ENCODE measurements at regions of chr4 and their contacts with region 1.

Region 1: GRCh38 chr4:41214136-41214824 is at the start of gene APBB2:
- DNase-seq: peak; percentile 80 to 91
- ATAC-seq: peak; percentile 83 to 85
- H3K4me3 ChIP-seq: peak within 1 kb of the TSS; percentile 59 to 85 (median 80)
- H3K27ac ChIP-seq: peak within 1 kb of the TSS; percentile 72 to 89 (median 78)
- H3K4me1 ChIP-seq: peaks cover 22 to 36% of the 10 kb centered on the region in 2 donors
- H3K27me3 ChIP-seq: no peaks in the 10 kb centered on the region
- CTCF ChIP-seq: peak; percentile 22 to 89 (median 63)
- POLR2A ChIP-seq: peak; percentile 65 to 77
- total RNA-seq, gene APBB2: 14.3 to 20.5 (median 14.5) TPM

Region 2: GRCh38 chr4:40912460-40913184 is 301.7 kb before region 1 on chr4:
- in situ Hi-C with region 1: no loop called
- intact Hi-C with region 1: no loop called
- DNase-seq: no peak
- ATAC-seq: no peak
- H3K4me3 ChIP-seq: no peak overlapping the region
- H3K27ac ChIP-seq: no peak overlapping the region
- H3K4me1 ChIP-seq: peaks cover 37 to 38% of the 10 kb centered on the region in 2 donors
- H3K27me3 ChIP-seq: no peaks in the 10 kb centered on the region
- CTCF ChIP-seq: no peak
- POLR2A ChIP-seq: no peak

Region 3: DNA sequence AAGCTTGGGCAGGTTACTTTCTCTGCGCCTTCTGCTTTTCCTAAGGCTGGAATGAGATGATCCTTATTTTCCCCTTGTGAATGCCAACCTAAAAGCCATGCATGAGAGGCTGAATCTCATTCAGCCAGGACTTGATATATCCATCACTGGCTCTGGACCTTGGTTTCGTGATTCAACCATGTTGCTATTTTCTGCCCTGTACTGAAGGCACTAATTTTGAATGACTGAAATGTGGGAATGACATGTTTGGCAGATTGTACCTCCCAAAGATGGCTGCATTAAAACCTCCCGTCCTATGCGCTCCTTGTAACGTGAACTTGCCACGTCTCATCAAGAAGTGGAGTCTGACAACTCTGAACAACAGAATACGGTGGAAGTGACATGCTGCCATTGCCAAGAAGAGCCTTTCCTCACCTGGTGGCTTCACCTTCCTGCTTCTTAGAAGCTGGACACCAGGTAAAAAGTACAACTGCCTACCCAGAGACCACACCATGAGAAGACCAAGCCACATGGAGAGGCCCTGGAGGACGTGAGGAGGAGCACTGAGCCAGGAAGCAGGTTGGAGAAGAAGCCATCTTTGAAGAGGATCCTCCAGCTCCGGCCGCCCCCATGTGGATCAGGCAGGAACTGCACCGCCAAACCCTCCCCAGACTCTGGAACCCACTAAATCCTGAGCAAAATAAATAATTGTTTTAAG is 290.0 kb before region 1 on chr4:
- in situ Hi-C with region 1: loop called (anchors 5 kb)
- intact Hi-C with region 1: loop called (anchors 1 kb)
- DNase-seq: peak in 1 of 2 donors; percentile 36
- ATAC-seq: peak; percentile 44 to 63
- H3K4me3 ChIP-seq: no peak overlapping the region
- H3K27ac ChIP-seq: peak overlapping the region in 3 of 4 donors; percentile 12 to 45 (median 33)
- H3K4me1 ChIP-seq: peaks cover 3 to 9% of the 10 kb centered on the region in 2 donors
- H3K27me3 ChIP-seq: no peaks in the 10 kb centered on the region
- CTCF ChIP-seq: peak; percentile 82 to 91 (median 83)
- POLR2A ChIP-seq: no peak

Region 4: GRCh38 chr4:41072021-41072777 is 142.1 kb before region 1 on chr4:
- in situ Hi-C with region 1: no loop called
- intact Hi-C with region 1: loop called (anchors 1 kb)
- DNase-seq: no peak
- ATAC-seq: peak; percentile 27 to 56
- H3K4me3 ChIP-seq: no peak overlapping the region
- H3K27ac ChIP-seq: peak overlapping the region in 3 of 4 donors; percentile 16 to 49 (median 18)
- H3K4me1 ChIP-seq: peaks cover 14 to 15% of the 10 kb centered on the region in 2 donors
- H3K27me3 ChIP-seq: no peaks in the 10 kb centered on the region
- CTCF ChIP-seq: no peak
- POLR2A ChIP-seq: no peak

Region 5: DNA sequence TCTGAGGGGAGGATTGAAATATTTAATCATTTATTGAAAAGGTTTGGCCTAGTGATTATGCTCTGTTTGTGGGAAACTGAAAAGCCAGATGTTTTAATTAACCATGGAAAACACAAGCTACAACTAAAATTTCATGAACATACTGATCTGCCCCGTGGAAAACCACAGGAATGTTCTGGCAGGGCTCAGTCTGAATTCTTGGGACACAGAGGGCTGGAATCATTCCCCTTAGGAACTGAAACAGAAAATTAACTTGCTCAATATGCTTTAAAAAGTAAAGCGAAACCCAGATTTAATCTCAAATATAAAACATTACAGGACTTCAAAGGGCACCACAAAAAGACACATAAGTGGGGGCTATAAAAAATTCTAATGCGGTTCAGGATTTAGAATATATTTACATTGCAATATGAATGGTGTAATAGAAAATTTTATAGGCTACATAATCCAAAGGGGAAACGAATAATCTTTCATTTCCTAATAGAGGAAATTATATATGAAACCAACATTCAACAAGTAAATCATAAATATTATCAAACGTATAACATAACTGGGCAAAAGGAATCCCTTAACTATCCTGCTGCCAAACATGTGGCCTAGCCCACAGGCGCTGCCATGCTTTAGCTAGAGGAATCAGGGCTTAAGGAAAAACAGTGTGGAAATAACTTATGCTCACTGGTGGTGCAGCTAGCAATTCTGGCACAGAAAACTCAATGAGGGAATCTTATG is 70.8 kb before region 1 on chr4:
- in situ Hi-C with region 1: no loop called
- intact Hi-C with region 1: loop called (anchors 5 kb)
- DNase-seq: peak; percentile 52 to 65
- ATAC-seq: peak; percentile 84 to 85
- H3K4me3 ChIP-seq: peak overlapping the region in 3 of 4 donors; percentile 1 to 7 (median 5)
- H3K27ac ChIP-seq: peak overlapping the region; percentile 77 to 83 (median 80)
- H3K4me1 ChIP-seq: peaks cover 37 to 56% of the 10 kb centered on the region in 2 donors
- H3K27me3 ChIP-seq: no peaks in the 10 kb centered on the region
- CTCF ChIP-seq: no peak
- POLR2A ChIP-seq: no peak

Region 6: DNA sequence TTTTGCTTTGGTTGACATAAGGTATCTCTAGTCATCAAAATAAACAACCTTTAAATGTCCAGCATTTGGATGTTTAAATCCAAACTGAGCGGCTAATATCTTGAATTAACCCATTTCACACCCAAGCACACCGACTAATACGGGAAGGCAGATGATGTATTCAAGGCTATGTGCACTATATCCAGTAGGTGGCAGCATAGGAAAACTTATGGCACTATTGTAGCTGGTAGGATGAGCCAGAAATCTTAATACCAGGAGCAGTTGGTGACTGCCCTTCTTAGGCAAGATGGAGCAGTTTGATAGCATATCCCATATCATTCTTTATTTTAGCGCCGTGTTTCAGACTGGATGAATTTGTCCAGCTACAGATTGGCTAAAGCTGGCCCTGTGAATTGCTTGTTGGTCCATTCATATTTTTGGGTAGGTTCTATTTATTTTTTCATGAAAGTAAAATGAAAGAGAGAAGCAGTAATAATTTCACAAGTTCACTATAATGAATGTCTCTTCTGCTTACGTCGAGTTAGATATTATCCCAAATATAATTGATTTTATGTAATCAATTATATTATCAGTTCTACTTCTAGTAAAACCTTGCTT is 66.9 kb after region 1 on chr4:
- in situ Hi-C with region 1: no loop called
- intact Hi-C with region 1: no loop called
- DNase-seq: peak; percentile 9 to 21
- ATAC-seq: peak; percentile 99 to 100
- H3K4me3 ChIP-seq: no peak overlapping the region
- H3K27ac ChIP-seq: no peak overlapping the region
- H3K4me1 ChIP-seq: no peaks in the 10 kb centered on the region
- H3K27me3 ChIP-seq: no peaks in the 10 kb centered on the region
- CTCF ChIP-seq: peak; percentile 84 to 91 (median 88)
- POLR2A ChIP-seq: no peak

Region 7: GRCh38 chr4:41360214-41360920 is 146.1 kb after region 1 on chr4:
- in situ Hi-C with region 1: no loop called
- intact Hi-C with region 1: loop called (anchors 5 kb)
- DNase-seq: peak; percentile 62 to 83
- ATAC-seq: peak; percentile 45 to 56
- H3K4me3 ChIP-seq: peak overlapping the region; percentile 84 to 96 (median 92)
- H3K27ac ChIP-seq: peak overlapping the region; percentile 89 to 93 (median 90)
- H3K4me1 ChIP-seq: peaks cover 34 to 35% of the 10 kb centered on the region in 2 donors
- H3K27me3 ChIP-seq: no peaks in the 10 kb centered on the region
- CTCF ChIP-seq: peak in 1 of 5 experiments; percentile 14
- POLR2A ChIP-seq: peak; percentile 22 to 55

Region 8: GRCh38 chr4:41550308-41550707 is 336.0 kb after region 1 on chr4:
- in situ Hi-C with region 1: no loop called
- intact Hi-C with region 1: no loop called
- DNase-seq: no peak
- ATAC-seq: peak; percentile 36 to 60
- H3K4me3 ChIP-seq: no peak overlapping the region
- H3K27ac ChIP-seq: peak overlapping the region in 1 of 4 donors; percentile 45
- H3K4me1 ChIP-seq: peaks cover 31 to 36% of the 10 kb centered on the region in 2 donors
- H3K27me3 ChIP-seq: no peaks in the 10 kb centered on the region
- CTCF ChIP-seq: no peak
- POLR2A ChIP-seq: no peak

Measured in gastrocnemius medialis (tissue), 4 donors.